ENCODE measurements at regions of chr13 and their contacts with region 1.

Region 1: DNA sequence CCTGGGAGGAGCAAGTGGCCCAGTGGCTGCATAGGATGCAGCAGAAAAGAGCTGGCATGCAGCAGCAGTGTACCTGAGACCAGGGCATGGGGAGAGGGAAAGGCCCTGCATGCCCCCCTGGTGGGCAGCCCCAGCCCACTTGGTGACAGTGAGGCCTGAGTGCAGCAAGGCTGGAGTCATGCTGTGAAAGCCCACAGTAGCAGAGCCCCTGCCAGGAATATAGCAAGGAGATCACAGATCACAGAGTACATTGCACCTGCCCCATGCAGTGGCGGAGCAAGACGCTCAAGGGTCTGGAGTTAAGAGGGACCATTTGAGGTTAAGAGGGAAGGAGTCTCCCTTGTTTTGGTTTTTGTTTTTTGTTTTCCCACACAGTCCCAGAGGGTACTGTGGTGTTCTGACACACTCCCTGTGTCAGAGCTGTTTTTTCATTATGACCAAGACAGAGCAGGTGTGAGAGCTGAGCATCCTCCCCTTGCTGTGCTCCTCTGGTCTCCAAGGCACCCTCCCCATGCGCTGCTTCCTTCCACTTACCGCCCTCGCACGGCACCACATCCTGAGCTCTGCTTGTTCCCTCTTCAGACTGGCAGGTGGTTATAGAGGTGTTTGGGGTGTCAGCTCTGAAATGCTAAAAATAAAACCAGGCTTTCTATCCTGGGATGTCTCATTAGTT is 85.0 kb upstream of the UBL3 start:
- DNase-seq: peak; percentile 94
- H3K4me3 Mint-ChIP-seq: peak overlapping the region; percentile 67
- H3K27ac Mint-ChIP-seq: peak overlapping the region; percentile 83
- H3K4me1 Mint-ChIP-seq: peaks cover 39% of the 10 kb centered on the region
- H3K27me3 Mint-ChIP-seq: no peaks in the 10 kb centered on the region

Region 2: DNA sequence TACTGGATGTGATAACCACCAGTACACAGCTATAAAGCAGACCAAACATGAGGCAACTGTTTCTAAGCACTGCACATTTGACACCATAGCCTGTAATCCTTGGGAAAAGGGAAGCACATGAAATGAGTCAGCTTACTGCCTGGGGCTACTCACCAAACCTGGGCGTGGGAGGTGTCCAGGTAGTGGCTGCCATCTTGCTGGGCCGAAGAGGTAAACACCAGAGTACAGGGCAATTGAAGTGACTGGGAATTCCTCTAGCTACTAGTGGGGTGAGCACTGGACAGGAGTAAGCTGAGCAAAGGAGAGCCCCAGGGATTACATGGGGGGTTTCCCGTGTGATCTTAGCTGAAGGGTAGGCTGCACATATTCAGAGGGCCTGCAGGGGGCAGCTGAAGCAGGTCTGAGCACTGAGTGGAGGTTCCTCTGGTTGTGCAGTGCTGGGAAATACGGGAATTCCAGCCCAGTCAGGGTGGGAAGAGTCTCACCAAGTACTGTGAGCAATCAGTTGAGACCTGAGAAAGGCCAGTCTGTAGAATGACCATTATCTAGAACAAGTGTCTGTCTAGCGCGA is 480.4 kb before region 1 on chr13:
- CTCF ChIA-PET with region 1: no interaction called
- intact Hi-C with region 1: no loop called
- DNase-seq: peak; percentile 6
- H3K4me3 Mint-ChIP-seq: no peak overlapping the region
- H3K27ac Mint-ChIP-seq: no peak overlapping the region
- H3K4me1 Mint-ChIP-seq: no peaks in the 10 kb centered on the region
- H3K27me3 Mint-ChIP-seq: peaks cover 8% of the 10 kb centered on the region

Region 3: GRCh38 chr13:29758531-29759114 is 176.8 kb before region 1 on chr13:
- CTCF ChIA-PET with region 1: no interaction called
- intact Hi-C with region 1: loop called (anchors 1 kb)
- DNase-seq: peak; percentile 84
- H3K4me3 Mint-ChIP-seq: no peak overlapping the region
- H3K27ac Mint-ChIP-seq: no peak overlapping the region
- H3K4me1 Mint-ChIP-seq: peaks cover 10% of the 10 kb centered on the region
- H3K27me3 Mint-ChIP-seq: no peaks in the 10 kb centered on the region

Region 4: DNA sequence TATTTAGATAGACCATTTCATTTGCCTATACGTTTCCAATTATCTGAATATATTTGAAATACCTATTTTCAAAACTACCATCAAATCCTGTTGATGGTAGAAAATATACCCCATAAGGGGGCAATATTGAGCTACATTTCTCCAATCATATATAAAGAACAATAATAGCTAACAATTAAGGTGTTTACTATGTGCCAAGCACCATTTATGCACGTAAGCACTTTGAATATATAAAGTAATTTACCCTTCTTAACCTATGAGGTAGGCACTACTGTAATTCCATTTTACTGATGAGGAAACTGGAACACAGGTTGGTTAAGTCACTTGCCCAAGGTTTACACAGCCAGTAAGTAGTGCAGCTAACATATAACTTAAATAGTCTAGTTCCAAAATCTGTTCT is 164.2 kb before region 1 on chr13:
- CTCF ChIA-PET with region 1: interaction called, 6 read pairs
- intact Hi-C with region 1: loop called (anchors 2 kb)
- DNase-seq: no peak
- H3K4me3 Mint-ChIP-seq: no peak overlapping the region
- H3K27ac Mint-ChIP-seq: no peak overlapping the region
- H3K4me1 Mint-ChIP-seq: peaks cover 2% of the 10 kb centered on the region
- H3K27me3 Mint-ChIP-seq: no peaks in the 10 kb centered on the region

Region 5: GRCh38 chr13:29907670-29908069 is 27.8 kb before region 1 on chr13:
- CTCF ChIA-PET with region 1: interaction called, 5 read pairs
- intact Hi-C with region 1: loop called (anchors 1 kb)
- DNase-seq: no peak
- H3K4me3 Mint-ChIP-seq: no peak overlapping the region
- H3K27ac Mint-ChIP-seq: no peak overlapping the region
- H3K4me1 Mint-ChIP-seq: peaks cover 21% of the 10 kb centered on the region
- H3K27me3 Mint-ChIP-seq: no peaks in the 10 kb centered on the region

Region 6: DNA sequence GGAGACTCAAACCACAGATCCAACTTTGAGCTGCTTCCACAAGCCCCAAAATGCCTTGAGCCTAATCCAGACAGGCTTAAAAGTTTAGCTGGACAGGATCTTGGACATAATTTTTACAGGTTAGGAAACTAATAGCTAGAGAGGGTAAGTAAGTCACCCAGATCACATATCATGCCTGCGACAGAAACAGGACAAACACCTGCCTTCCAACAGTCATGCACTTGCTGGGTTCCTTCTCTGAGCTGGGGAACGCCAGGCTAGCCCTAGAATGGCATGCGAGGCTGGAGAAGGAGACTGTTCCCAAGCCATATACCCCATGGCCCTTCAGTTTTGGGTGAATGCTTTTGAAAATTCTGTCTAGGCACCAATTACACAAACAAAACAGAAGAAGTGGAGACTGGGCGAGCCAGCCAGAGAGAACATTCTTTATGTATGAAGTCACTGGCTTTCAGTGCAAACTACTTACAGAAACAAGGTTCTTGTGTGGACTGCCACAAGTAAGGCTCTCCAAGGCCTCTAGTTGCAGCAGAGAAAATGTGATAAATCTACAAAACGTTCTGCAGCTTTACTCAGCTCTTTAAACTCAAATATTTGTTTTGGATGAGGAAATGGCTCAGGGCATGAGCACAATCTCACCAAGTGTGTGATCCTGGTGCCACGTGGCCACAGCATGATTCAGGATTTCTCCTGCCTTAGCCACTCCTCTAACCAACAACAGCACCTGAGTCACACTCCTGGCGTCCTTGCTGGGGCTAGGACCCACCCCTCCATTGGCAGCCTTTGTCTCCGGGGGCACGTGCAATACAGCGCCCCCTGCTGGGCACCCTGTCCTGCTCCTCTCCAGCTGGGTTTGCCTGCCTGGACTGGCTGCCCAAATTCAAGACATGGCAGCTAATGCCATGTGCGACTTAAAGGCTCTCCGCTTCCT is 11.6 kb before region 1 on chr13:
- CTCF ChIA-PET with region 1: interaction called, 62 read pairs
- intact Hi-C with region 1: loop called (anchors 1 kb)
- DNase-seq: peak; percentile 75
- H3K4me3 Mint-ChIP-seq: no peak overlapping the region
- H3K27ac Mint-ChIP-seq: no peak overlapping the region
- H3K4me1 Mint-ChIP-seq: peaks cover 19% of the 10 kb centered on the region
- H3K27me3 Mint-ChIP-seq: no peaks in the 10 kb centered on the region

Region 7: DNA sequence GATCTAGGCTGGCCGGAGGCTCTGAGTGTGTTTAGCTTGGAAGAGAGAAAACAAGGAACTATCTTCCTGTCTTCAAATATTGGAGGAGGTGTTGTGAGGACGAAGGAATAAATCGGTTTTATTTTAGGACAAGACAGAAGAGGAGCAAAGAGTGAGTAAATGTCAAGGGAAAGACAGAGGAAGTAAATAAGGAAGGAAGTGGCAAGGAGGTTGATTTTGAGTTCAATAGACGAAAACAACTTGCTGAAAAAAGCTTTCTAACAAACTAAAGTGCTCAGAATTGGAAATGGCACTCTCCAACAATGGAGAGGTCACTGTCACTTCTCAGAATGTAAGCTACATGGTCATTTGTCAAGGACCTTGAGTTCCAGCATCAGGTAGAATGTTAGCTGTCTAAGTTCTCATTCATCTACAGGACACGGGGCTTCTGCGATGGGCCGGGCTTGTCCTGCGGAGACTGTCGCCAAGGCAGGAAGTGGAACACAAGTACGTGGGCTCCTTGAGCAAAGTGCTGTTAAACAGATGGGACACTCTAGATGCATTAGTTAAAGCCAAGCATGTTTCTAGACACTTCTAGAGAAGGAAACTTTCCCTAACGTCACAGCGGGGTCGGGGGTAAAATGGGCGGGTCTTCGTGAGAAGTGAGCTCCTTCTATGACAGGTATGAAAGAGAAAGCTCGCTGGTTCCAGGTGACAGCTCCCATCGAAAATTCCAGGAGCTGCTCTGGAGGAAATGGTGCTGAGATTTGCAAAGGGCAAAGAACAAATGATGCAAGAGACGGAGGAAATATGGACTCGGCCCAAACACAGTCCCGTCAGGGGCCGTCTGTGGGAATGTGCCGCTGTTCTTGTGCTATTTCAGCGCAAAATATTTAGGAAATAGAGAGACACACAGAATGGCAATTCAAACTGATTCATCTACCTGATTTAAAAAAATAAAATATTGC is 18.9 kb after region 1 on chr13:
- CTCF ChIA-PET with region 1: interaction called, 4 read pairs
- intact Hi-C with region 1: loop called (anchors 1 kb)
- DNase-seq: peak; percentile 63
- H3K4me3 Mint-ChIP-seq: peak overlapping the region; percentile 61
- H3K27ac Mint-ChIP-seq: peak overlapping the region; percentile 59
- H3K4me1 Mint-ChIP-seq: peaks cover 24% of the 10 kb centered on the region
- H3K27me3 Mint-ChIP-seq: no peaks in the 10 kb centered on the region

Measured in activated naive CD4-positive, alpha-beta T cell treated with anti-CD3 and anti-CD28 coated beads for 36 hours (primary cell).